MCF 10A (cell line): ENCODE measurements at regions of chr17 and their contacts with region 1.

Region 1: GRCh38 chr17:49399995-49400394 is 14.7 kb downstream of the PHB1 start:
- DNase-seq: no peak
- H3K4me3 Mint-ChIP-seq: no peak overlapping the region
- H3K27ac Mint-ChIP-seq: no peak overlapping the region
- H3K4me1 Mint-ChIP-seq: peaks cover 6% of the 10 kb centered on the region
- H3K27me3 Mint-ChIP-seq: no peaks in the 10 kb centered on the region
- CTCF ChIP-seq: no peak

Region 2: GRCh38 chr17:49201481-49201927 is 198.5 kb before region 1 on chr17:
- CTCF ChIA-PET with region 1: no interaction called
- POLR2A ChIA-PET with region 1: no interaction called
- intact Hi-C with region 1: no loop called
- DNase-seq: no peak
- H3K4me3 Mint-ChIP-seq: no peak overlapping the region
- H3K27ac Mint-ChIP-seq: no peak overlapping the region
- H3K4me1 Mint-ChIP-seq: no peaks in the 10 kb centered on the region
- H3K27me3 Mint-ChIP-seq: peaks cover 41% of the 10 kb centered on the region
- CTCF ChIP-seq: no peak

Region 3: DNA sequence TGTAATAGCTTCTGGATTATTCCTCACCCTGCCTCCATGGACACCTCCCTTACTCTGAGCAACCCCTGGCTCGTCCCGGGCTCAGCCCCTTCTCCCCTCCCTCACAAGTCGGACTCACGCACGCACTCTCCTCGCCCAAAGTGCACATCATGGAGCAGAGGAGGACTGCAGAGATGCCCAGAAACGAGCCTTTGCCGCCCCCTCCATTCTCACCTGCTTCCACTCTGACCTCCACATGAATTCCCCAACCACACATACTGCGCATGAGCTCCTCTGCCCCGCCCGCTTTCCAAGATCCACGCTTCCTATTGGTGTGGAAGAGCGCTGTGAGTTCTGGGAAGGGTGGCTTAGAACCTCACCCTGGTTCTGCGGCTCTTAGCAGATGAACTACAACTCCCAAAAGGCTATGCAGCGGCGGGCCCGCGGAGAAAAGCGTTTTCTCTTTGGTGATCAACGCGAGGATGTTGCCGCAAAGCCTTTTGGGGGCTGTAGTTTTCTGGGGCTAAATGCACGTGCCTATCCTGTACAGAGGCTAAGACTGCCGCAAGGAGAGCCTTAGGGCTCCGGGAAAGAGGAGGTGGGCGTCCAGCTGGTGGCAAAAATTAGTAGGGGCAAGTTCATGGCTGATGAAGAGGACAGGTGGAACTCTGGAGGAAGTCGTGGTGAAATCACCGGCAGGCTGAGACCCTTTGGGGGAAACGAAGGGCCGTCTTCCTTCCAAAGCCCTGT is 14.8 kb after region 1 on chr17 and contains the start of gene PHB1:
- CTCF ChIA-PET with region 1: interaction called, 4 read pairs
- POLR2A ChIA-PET with region 1: interaction called, 10 read pairs
- intact Hi-C with region 1: no loop called
- DNase-seq: peak; percentile 98
- H3K4me3 Mint-ChIP-seq: peak within 1 kb of the TSS; percentile 84
- H3K27ac Mint-ChIP-seq: peak within 1 kb of the TSS; percentile 78
- H3K4me1 Mint-ChIP-seq: peaks cover 6% of the 10 kb centered on the region
- H3K27me3 Mint-ChIP-seq: no peaks in the 10 kb centered on the region
- CTCF ChIP-seq: no peak
- total RNA-seq, gene PHB1: 122 and 134 TPM in 2 replicates

Region 4: DNA sequence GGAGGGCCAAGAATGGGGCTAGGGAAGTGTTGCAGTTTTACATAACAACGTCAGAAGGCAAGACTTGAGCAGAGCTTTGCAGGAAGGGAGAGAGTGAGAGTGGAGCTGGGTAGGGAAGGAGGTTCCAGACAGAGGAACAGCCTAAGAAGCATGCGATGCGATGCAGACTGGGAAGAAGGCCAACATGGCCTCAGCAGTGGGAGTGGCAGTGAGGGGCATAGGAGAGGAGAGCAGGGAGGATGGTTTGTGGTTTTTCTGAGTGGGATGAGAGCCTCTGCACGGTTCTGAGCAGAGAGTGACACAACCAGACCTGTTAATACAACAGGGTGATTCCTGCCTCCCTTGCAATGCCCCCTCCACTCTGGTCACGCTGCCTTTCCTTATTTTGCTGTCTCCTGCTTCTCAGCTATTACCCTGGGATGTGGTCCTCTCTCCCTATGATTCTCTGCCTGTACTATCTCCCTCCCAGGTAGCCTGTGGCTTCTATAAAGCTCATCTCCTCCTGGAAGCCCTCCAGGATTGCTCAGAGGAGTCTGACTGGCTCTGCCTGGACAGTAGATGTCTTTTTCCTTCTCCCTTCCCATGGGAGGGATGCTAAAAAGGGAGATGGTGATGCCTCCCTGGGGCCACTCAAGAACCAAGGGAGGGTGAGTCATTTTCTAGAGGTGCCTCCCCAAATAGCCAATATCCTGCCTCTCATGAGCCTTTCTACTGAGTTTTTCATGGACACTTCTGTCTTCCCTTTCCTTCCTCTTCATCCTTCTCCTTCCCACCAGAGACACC is 56.4 kb after region 1 on chr17:
- CTCF ChIA-PET with region 1: no interaction called
- POLR2A ChIA-PET with region 1: no interaction called
- intact Hi-C with region 1: no loop called
- DNase-seq: peak; percentile 23
- H3K4me3 Mint-ChIP-seq: no peak overlapping the region
- H3K27ac Mint-ChIP-seq: no peak overlapping the region
- H3K4me1 Mint-ChIP-seq: no peaks in the 10 kb centered on the region
- H3K27me3 Mint-ChIP-seq: peaks cover 58% of the 10 kb centered on the region
- CTCF ChIP-seq: no peak

Region 5: GRCh38 chr17:49472527-49472926 is 72.5 kb after region 1 on chr17:
- CTCF ChIA-PET with region 1: no interaction called
- POLR2A ChIA-PET with region 1: no interaction called
- intact Hi-C with region 1: no loop called
- DNase-seq: no peak
- H3K4me3 Mint-ChIP-seq: no peak overlapping the region
- H3K27ac Mint-ChIP-seq: no peak overlapping the region
- H3K4me1 Mint-ChIP-seq: no peaks in the 10 kb centered on the region
- H3K27me3 Mint-ChIP-seq: peaks cover 82% of the 10 kb centered on the region
- CTCF ChIP-seq: no peak